Sigmoid colon (tissue), 7 donors: ENCODE measurements at regions of chr16 and their contacts with region 1.

Region 1: DNA sequence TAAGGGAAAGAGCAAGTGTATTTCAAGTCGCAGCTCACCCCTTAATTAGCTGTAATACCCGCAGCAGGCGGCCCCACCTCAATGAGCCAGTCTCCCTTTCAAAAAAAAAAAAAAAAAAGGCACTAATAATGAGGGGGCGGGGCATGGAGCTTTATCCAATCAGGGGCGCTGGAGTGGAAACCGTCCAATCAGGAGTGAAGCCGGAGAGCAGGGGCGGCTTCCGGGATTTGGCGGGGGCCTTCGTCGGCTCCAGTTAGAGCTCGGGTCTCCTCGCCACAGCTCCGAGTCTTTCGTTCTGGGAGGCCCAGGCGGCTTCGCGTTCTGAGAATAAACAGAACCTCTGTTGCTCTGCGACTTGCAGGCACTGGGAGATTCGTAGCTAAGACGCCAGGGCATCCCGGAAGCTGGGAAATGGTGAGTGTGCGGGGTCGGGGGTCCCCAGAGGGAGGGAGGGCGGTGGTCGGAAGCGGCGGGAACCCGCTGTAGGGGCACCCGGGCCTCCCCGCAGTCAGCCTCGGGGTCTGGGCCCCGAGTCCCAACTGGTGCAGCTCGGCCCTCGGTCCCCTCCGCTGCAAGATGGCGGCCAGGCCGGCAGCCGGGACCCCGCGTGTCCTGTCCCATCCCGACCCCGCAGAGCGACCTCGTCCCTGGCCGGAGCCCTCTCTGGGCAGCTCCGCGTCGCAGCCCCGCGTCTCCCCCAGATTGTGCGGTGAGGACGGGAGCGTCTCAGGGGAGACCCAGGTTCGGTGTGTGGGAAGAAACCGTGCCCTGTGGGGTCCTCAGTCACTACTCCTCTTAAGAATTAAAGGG is at the start of gene ZNF267:
- DNase-seq: peak; percentile 98
- H3K4me3 ChIP-seq: peak within 1 kb of the TSS; percentile 85 to 99 (median 94)
- H3K27ac ChIP-seq: peak within 1 kb of the TSS; percentile 87 to 98 (median 98)
- H3K4me1 ChIP-seq: peaks cover 0 to 50% (median 46%) of the 10 kb centered on the region in 4 donors
- H3K27me3 ChIP-seq: no peaks in the 10 kb centered on the region
- CTCF ChIP-seq: no peak
- EP300 ChIP-seq: no peak
- POLR2A ChIP-seq: peak; percentile 84 to 89
- total RNA-seq, gene ZNF267: 6.5 to 11.6 (median 10.0) TPM

Region 2: DNA sequence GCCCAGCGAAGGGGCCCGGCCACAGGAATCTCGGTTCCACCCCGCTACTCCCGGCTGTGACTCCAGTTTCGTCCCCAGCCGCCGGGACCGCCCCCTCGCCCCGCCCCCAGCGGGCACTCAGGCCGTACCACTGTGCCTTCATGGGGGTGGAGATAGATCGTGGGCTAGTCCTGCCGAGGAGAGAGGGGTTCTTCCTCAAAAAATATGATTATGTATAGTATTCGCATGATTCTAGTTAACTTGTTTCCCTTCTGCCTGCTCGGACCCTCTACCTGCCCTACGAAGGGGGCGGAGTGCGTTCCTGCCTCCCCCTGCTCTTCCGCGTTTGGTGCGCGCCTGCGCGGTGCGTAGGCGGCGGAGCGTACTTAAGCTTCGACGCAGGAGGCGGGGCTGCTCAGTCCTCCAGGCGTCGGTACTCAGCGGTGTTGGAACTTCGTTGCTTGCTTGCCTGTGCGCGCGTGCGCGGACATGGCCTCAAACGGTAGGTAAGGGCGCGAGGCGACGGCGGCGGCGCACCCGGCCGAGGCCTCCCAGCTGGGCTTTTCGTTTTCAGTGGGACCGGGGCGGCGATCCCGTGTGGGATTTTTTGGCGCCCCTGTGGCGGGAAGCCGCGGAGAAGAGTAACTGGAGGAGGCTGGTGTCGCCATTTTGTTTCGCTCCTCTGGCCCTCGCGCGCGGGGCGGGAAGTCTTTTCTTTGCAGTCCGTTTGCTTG is 693.9 kb before region 1 on chr16 and contains the start of gene FUS:
- intact Hi-C with region 1: loop called (anchors 10 kb)
- DNase-seq: peak; percentile 96
- H3K4me3 ChIP-seq: peak within 1 kb of the TSS; percentile 77 to 94 (median 92)
- H3K27ac ChIP-seq: peak within 1 kb of the TSS; percentile 93 to 99 (median 98)
- H3K4me1 ChIP-seq: peaks cover 0 to 42% (median 40%) of the 10 kb centered on the region in 4 donors
- H3K27me3 ChIP-seq: no peaks in the 10 kb centered on the region
- CTCF ChIP-seq: no peak
- EP300 ChIP-seq: no peak
- POLR2A ChIP-seq: peak; percentile 97
- total RNA-seq, gene FUS: 44.1 to 63.9 (median 60.4) TPM

Region 3: DNA sequence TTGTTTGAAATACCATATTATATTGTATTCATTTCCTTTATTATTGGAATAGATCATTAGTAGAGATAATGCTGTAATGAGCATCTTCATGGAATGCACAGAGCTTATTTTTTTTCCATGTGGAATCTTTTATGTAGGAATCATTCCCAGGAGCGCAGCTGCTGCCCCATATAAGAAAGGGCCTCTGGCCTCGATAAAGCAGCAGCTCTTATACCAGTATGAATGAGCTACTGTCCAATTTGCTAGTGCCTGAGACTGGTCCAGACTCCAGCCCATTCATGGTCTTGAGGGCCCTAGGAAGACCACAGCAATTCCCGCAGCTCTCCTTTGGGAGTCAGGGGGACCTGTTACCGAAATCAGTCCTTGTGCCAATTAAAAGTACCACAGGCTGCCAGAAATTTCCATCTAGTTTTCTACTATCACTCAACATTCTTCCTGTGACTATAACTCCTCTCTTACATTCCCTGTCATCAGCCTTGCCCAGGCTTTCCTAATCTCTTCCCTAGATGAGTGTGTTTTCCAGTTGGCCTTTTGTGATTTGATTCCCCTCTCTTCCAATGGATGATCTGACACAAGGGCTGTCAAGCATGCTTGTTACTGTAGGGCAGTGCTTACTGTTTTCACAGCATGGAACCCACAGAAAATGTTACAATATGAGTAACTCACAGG is 433.1 kb before region 1 on chr16:
- intact Hi-C with region 1: loop called (anchors 5 kb)
- DNase-seq: peak; percentile 30
- H3K4me3 ChIP-seq: no peak overlapping the region
- H3K27ac ChIP-seq: no peak overlapping the region
- H3K4me1 ChIP-seq: peaks cover 0 to 12% (median 7%) of the 10 kb centered on the region in 4 donors
- H3K27me3 ChIP-seq: no peaks in the 10 kb centered on the region
- CTCF ChIP-seq: no peak
- EP300 ChIP-seq: no peak
- POLR2A ChIP-seq: no peak

Region 4: GRCh38 chr16:31507929-31508705 is 365.6 kb before region 1 on chr16 and contains the start of gene RUSF1:
- intact Hi-C with region 1: loop called (anchors 10 kb)
- DNase-seq: peak; percentile 95
- H3K4me3 ChIP-seq: peak within 1 kb of the TSS; percentile 75 to 97 (median 92)
- H3K27ac ChIP-seq: peak within 1 kb of the TSS; percentile 92 to 97 (median 94)
- H3K4me1 ChIP-seq: peaks cover 0 to 42% (median 31%) of the 10 kb centered on the region in 4 donors
- H3K27me3 ChIP-seq: no peaks in the 10 kb centered on the region
- CTCF ChIP-seq: no peak
- EP300 ChIP-seq: peak in 1 of 4 donors; percentile 61
- POLR2A ChIP-seq: peak; percentile 91
- total RNA-seq, gene RUSF1: 31.6 to 67.0 (median 37.2) TPM

Region 5: GRCh38 chr16:31664713-31665482 is 208.9 kb before region 1 on chr16:
- intact Hi-C with region 1: no loop called
- DNase-seq: no peak
- H3K4me3 ChIP-seq: no peak overlapping the region
- H3K27ac ChIP-seq: no peak overlapping the region
- H3K4me1 ChIP-seq: no peaks in the 10 kb centered on the region
- H3K27me3 ChIP-seq: no peaks in the 10 kb centered on the region
- CTCF ChIP-seq: no peak
- EP300 ChIP-seq: no peak
- POLR2A ChIP-seq: no peak

Region 6: GRCh38 chr16:31713071-31713944 is 160.5 kb before region 1 on chr16:
- intact Hi-C with region 1: loop called (anchors 5 kb)
- DNase-seq: peak; percentile 97
- H3K4me3 ChIP-seq: peak overlapping the region; percentile 88 to 96 (median 91)
- H3K27ac ChIP-seq: peak overlapping the region; percentile 94 to 96 (median 96)
- H3K4me1 ChIP-seq: peaks cover 0 to 27% (median 20%) of the 10 kb centered on the region in 4 donors
- H3K27me3 ChIP-seq: no peaks in the 10 kb centered on the region
- CTCF ChIP-seq: no peak
- EP300 ChIP-seq: no peak
- POLR2A ChIP-seq: peak; percentile 73 to 84